Activated CD8-positive, alpha-beta T cell treated with anti-CD3 and anti-CD28 coated beads, Interleukin-2, amount 10 ng/mL, durations not matched to agents 7 days and 5 days (primary cell): ENCODE measurements at regions of chr6 and their contacts with region 1.

Region 1: GRCh38 chr6:134063966-134064445 is 11.6 kb upstream of the SLC2A12 start:
- DNase-seq: peak; percentile 72
- ATAC-seq: peak; percentile 90
- H3K4me3 Mint-ChIP-seq: no peak overlapping the region
- H3K27ac Mint-ChIP-seq: no peak overlapping the region
- H3K4me1 Mint-ChIP-seq: no peaks in the 10 kb centered on the region
- H3K27me3 Mint-ChIP-seq: peaks cover 9% of the 10 kb centered on the region

Region 2: DNA sequence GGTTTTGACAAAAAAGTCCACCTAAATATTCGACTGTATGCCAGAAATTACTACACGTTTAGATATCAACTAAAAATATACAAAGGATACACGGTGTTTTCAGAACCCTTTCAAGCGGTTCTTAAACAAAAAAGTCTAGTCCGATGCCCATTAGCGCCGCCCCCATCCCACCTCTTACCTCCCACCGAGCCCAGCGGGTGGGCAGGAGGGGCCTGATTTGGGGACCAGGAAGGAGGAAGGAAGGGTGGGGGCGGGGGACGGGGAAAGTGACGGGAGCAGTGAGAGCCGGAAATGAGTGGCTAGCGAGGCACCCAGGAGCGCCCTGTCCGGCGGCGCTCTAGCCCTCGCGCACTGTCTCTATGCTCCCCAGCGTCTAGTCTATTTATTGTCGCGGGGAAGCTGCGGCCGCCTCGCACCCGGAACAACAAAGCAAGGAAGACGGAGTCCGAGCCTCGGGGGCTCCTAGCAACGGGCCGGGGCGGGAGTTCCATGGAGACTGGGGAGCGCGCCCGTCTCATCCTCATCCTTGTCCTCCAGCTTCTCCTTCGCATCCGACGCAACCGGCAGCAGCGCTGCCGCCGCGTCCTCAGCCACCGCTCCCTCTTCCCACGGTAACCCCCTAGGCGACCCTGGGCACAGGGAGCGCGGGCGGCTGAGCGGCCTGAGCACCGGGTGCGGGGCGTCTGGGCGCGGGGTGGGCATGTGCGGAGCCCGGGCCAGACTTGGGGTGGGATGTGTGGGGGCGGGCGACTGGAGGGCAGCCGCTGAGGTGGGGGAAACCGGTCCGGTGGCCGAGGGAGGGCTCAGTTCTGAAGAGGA is 111.0 kb before region 1 on chr6 and contains the start of gene TBPL1:
- CTCF ChIA-PET with region 1: interaction called, 26 read pairs
- POLR2A ChIA-PET with region 1: no interaction called
- DNase-seq: peak; percentile 92
- ATAC-seq: peak; percentile 94
- H3K4me3 Mint-ChIP-seq: peak within 1 kb of the TSS; percentile 95
- H3K27ac Mint-ChIP-seq: peak within 1 kb of the TSS; percentile 85
- H3K4me1 Mint-ChIP-seq: peaks cover 41% of the 10 kb centered on the region
- H3K27me3 Mint-ChIP-seq: peaks cover 10% of the 10 kb centered on the region
- total RNA-seq, gene TBPL1: 29.1 to 35.2 TPM

Region 3: GRCh38 chr6:133983099-133983939 is 80.7 kb before region 1 on chr6:
- CTCF ChIA-PET with region 1: interaction called, 26 read pairs
- POLR2A ChIA-PET with region 1: no interaction called
- DNase-seq: peak; percentile 69
- ATAC-seq: peak; percentile 92
- H3K4me3 Mint-ChIP-seq: peak overlapping the region; percentile 35
- H3K27ac Mint-ChIP-seq: peak overlapping the region; percentile 66
- H3K4me1 Mint-ChIP-seq: peaks cover 50% of the 10 kb centered on the region
- H3K27me3 Mint-ChIP-seq: no peaks in the 10 kb centered on the region

Region 4: GRCh38 chr6:134022650-134023049 is 41.4 kb before region 1 on chr6:
- CTCF ChIA-PET with region 1: interaction called, 15 read pairs
- POLR2A ChIA-PET with region 1: no interaction called
- DNase-seq: no peak
- ATAC-seq: no peak
- H3K4me3 Mint-ChIP-seq: no peak overlapping the region
- H3K27ac Mint-ChIP-seq: no peak overlapping the region
- H3K4me1 Mint-ChIP-seq: peaks cover 2% of the 10 kb centered on the region
- H3K27me3 Mint-ChIP-seq: peaks cover 9% of the 10 kb centered on the region

Region 5: GRCh38 chr6:134080171-134080795 is 16.3 kb after region 1 on chr6:
- CTCF ChIA-PET with region 1: interaction called, 11 read pairs
- POLR2A ChIA-PET with region 1: interaction called, 3 read pairs
- DNase-seq: peak; percentile 22
- ATAC-seq: peak; percentile 15
- H3K4me3 Mint-ChIP-seq: no peak overlapping the region
- H3K27ac Mint-ChIP-seq: no peak overlapping the region
- H3K4me1 Mint-ChIP-seq: peaks cover 26% of the 10 kb centered on the region
- H3K27me3 Mint-ChIP-seq: peaks cover 8% of the 10 kb centered on the region

Region 6: GRCh38 chr6:134170844-134171243 is 106.8 kb after region 1 on chr6:
- CTCF ChIA-PET with region 1: no interaction called
- POLR2A ChIA-PET with region 1: no interaction called
- DNase-seq: no peak
- ATAC-seq: no peak
- H3K4me3 Mint-ChIP-seq: peak overlapping the region; percentile 6
- H3K27ac Mint-ChIP-seq: no peak overlapping the region
- H3K4me1 Mint-ChIP-seq: peaks cover 42% of the 10 kb centered on the region
- H3K27me3 Mint-ChIP-seq: no peaks in the 10 kb centered on the region